Panc1 (cell line): ENCODE measurements at regions of chr15 and their contacts with region 1.

Region 1: DNA sequence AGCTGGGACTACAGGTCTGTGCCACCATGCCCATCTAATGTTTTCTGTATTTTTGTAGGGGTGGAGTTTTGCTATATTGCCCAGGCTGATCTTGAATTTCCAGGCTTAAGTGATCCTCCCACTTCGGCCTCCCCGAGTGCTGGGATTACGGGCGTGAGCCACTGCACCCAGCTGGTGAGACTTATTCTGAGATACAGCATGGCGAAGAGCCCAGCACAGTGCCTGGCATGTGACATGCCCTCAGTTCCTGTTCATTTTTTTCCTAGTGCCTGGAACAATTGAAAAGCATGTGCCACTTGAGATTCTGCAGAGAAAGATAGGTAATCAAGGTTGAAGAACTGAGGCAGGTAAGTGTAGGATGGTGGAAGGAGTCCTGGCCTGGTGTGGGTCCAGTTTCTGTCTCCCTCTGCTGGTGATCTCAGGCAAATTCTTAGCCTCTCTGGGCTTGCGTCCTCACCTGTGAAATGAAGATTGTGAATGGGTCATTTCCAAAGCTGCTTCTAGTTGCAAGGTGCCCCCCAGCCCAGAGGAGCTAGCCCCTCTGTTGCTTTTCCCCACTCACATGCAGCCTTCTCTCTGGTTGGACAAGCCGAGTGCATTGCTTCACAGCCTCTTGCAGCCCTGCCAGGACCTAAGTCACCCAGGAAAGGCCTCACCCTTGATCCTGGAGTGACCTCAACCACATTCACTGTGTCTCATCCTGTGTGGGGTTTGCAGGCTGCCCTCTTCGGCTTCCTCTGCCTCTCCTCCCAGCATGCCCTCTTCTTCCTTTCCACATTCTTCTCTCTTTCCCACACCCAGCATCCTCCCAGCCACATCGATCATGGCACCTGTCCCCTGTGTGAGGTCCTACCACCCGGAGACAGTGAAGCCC is 4.3 kb upstream of the RHCG start:
- DNase-seq: no peak
- ATAC-seq: no peak
- H3K4me3 ChIP-seq: no peak overlapping the region
- H3K27ac ChIP-seq: no peak overlapping the region
- H3K4me1 ChIP-seq: peaks cover 24% of the 10 kb centered on the region
- H3K27me3 ChIP-seq: no peaks in the 10 kb centered on the region
- CTCF ChIP-seq: peak; percentile 80

Region 2: DNA sequence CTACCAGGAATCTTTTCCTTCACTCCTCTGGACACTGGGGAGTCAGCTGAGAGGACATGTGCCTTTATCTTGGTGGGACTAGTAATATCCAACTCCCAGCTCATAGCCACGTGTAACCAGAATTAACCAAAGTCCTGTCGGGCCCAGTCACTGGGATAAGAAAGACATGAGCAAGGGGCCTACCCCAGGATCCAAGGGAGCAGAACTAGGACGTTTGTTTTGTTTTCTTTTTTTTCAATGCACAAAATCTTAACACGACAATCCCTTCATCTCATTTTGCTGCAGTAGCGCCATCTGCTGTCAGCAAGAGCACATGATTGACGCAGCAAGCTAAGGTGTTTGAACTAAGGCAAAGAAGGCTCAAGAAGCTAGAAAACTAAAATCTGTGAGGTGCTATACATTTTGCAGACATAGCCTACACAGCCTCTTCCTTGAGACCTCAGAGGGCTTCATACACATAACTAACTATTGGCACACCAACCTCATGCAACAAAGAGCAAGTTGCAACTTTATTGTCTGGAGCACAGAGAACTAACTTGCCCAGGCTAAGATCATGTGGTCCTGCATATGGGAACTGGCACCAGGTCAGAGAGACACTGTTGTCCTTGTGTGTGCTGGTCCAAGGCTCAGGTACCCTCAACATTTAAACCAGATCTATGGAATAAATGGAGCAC is 322.9 kb before region 1 on chr15:
- CTCF ChIA-PET with region 1: no interaction called
- POLR2A ChIA-PET with region 1: no interaction called
- in situ Hi-C with region 1: no loop called
- intact Hi-C with region 1: no loop called
- DNase-seq: peak; percentile 36
- ATAC-seq: peak; percentile 80
- H3K4me3 ChIP-seq: no peak overlapping the region
- H3K27ac ChIP-seq: no peak overlapping the region; the same call in none of the 2 replicates
- H3K4me1 ChIP-seq: no peaks in the 10 kb centered on the region
- H3K27me3 ChIP-seq: no peaks in the 10 kb centered on the region
- CTCF ChIP-seq: peak; percentile 91

Region 3: DNA sequence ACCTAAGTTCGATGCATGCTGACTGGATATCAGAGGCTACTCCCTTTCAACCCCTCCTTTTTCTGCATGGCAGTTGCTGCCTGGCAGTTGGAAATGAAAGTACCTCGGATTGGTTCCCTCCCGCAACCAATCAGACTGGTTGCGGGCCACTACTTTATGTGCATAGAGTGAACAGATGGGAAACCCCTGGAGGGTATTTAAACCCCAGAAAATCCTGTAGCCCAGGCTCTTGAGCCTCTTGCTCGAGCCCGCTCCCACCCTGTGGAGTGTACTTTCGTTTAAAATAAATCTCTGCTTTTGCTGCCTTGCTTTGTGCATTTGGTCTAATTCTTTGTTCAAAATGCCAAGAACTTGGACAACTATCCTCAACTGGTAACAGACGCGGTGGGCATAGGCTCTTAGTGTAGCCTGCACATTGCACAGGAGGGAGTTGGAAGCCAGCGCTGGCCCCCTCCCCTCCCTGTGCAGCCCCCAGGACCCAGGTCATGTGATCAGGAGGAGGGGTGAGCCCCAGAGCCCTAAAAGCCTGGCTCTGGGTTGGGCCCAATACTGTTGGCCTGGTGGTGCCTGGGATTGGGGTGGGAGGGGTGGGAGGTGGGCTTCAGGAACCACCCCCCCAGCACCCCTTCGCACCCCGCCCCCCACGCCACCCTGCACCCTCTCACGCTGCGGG is 31.1 kb before region 1 on chr15:
- CTCF ChIA-PET with region 1: no interaction called
- POLR2A ChIA-PET with region 1: no interaction called
- in situ Hi-C with region 1: no loop called
- intact Hi-C with region 1: no loop called
- DNase-seq: no peak
- ATAC-seq: no peak
- H3K4me3 ChIP-seq: no peak overlapping the region
- H3K27ac ChIP-seq: no peak overlapping the region
- H3K4me1 ChIP-seq: no peaks in the 10 kb centered on the region
- H3K27me3 ChIP-seq: no peaks in the 10 kb centered on the region
- CTCF ChIP-seq: no peak

Region 4: GRCh38 chr15:89489376-89489775 is 11.3 kb before region 1 on chr15:
- CTCF ChIA-PET with region 1: interaction called, 4 read pairs
- POLR2A ChIA-PET with region 1: interaction called, 12 read pairs
- in situ Hi-C with region 1: no loop called
- intact Hi-C with region 1: no loop called
- DNase-seq: no peak
- ATAC-seq: no peak
- H3K4me3 ChIP-seq: no peak overlapping the region
- H3K27ac ChIP-seq: no peak overlapping the region
- H3K4me1 ChIP-seq: peaks cover 4% of the 10 kb centered on the region; the same call in 1 of the 2 replicates
- H3K27me3 ChIP-seq: no peaks in the 10 kb centered on the region
- CTCF ChIP-seq: no peak

Region 5: GRCh38 chr15:89587952-89588351 is 87.3 kb after region 1 on chr15:
- CTCF ChIA-PET with region 1: no interaction called
- POLR2A ChIA-PET with region 1: no interaction called
- in situ Hi-C with region 1: no loop called
- intact Hi-C with region 1: no loop called
- DNase-seq: no peak
- ATAC-seq: no peak
- H3K4me3 ChIP-seq: no peak overlapping the region
- H3K27ac ChIP-seq: no peak overlapping the region
- H3K4me1 ChIP-seq: no peaks in the 10 kb centered on the region
- H3K27me3 ChIP-seq: no peaks in the 10 kb centered on the region
- CTCF ChIP-seq: no peak